ENCODE measurements at regions of chr15 and their contacts with region 1.

Region 1: GRCh38 chr15:61841466-61841865 is 218.8 kb downstream of the VPS13C start:
- DNase-seq: no peak
- ATAC-seq: no peak
- H3K4me3 ChIP-seq: no peak overlapping the region
- H3K27ac ChIP-seq: no peak overlapping the region
- H3K4me1 ChIP-seq: no peaks in the 10 kb centered on the region
- H3K27me3 ChIP-seq: peaks cover 0 to 6% (median 0%) of the 10 kb centered on the region in 9 donors
- CTCF ChIP-seq: no peak
- POLR2A ChIP-seq: no peak

Region 2: GRCh38 chr15:61750381-61751084 is 90.9 kb before region 1 on chr15:
- intact Hi-C with region 1: no loop called
- DNase-seq: no peak
- ATAC-seq: no peak
- H3K4me3 ChIP-seq: no peak overlapping the region
- H3K27ac ChIP-seq: no peak overlapping the region
- H3K4me1 ChIP-seq: no peaks in the 10 kb centered on the region
- H3K27me3 ChIP-seq: peaks cover 0 to 10% (median 0%) of the 10 kb centered on the region in 9 donors
- CTCF ChIP-seq: no peak
- POLR2A ChIP-seq: no peak

Region 3: GRCh38 chr15:61879219-61879618 is 37.8 kb after region 1 on chr15:
- intact Hi-C with region 1: no loop called
- DNase-seq: no peak
- ATAC-seq: no peak
- H3K4me3 ChIP-seq: no peak overlapping the region
- H3K27ac ChIP-seq: no peak overlapping the region
- H3K4me1 ChIP-seq: no peaks in the 10 kb centered on the region
- H3K27me3 ChIP-seq: no peaks in the 10 kb centered on the region
- CTCF ChIP-seq: no peak
- POLR2A ChIP-seq: no peak

Region 4: GRCh38 chr15:61906961-61907752 is 65.7 kb after region 1 on chr15:
- intact Hi-C with region 1: loop called in 1 of 10 experiments (anchors 10 kb)
- DNase-seq: no peak
- ATAC-seq: no peak
- H3K4me3 ChIP-seq: no peak overlapping the region
- H3K27ac ChIP-seq: no peak overlapping the region
- H3K4me1 ChIP-seq: no peaks in the 10 kb centered on the region
- H3K27me3 ChIP-seq: no peaks in the 10 kb centered on the region
- CTCF ChIP-seq: no peak
- POLR2A ChIP-seq: no peak

Region 5: GRCh38 chr15:62190274-62190673 is 348.8 kb after region 1 on chr15:
- intact Hi-C with region 1: no loop called
- DNase-seq: no peak
- ATAC-seq: no peak
- H3K4me3 ChIP-seq: no peak overlapping the region
- H3K27ac ChIP-seq: no peak overlapping the region
- H3K4me1 ChIP-seq: peaks cover 0 to 9% (median 0%) of the 10 kb centered on the region in 12 donors
- H3K27me3 ChIP-seq: peaks cover 0 to 5% (median 0%) of the 10 kb centered on the region in 9 donors
- CTCF ChIP-seq: no peak
- POLR2A ChIP-seq: no peak

Measured in heart left ventricle (tissue), 16 donors.